Caco-2 (cell line): ENCODE measurements at regions of chr2 and their contacts with region 1.

Region 1: GRCh38 chr2:36450466-36451196 is 95.1 kb downstream of the CRIM1 start:
- DNase-seq: no peak
- H3K4me3 ChIP-seq: no peak overlapping the region
- H3K4me3 Mint-ChIP-seq: peak overlapping the region; percentile 3
- H3K27ac Mint-ChIP-seq: no peak overlapping the region
- H3K4me1 ChIP-seq: peaks cover 92% of the 10 kb centered on the region
- H3K4me1 Mint-ChIP-seq: peaks cover 43% of the 10 kb centered on the region
- H3K27me3 ChIP-seq: no peaks in the 10 kb centered on the region
- H3K27me3 Mint-ChIP-seq: no peaks in the 10 kb centered on the region
- CTCF ChIP-seq: no peak

Region 2: DNA sequence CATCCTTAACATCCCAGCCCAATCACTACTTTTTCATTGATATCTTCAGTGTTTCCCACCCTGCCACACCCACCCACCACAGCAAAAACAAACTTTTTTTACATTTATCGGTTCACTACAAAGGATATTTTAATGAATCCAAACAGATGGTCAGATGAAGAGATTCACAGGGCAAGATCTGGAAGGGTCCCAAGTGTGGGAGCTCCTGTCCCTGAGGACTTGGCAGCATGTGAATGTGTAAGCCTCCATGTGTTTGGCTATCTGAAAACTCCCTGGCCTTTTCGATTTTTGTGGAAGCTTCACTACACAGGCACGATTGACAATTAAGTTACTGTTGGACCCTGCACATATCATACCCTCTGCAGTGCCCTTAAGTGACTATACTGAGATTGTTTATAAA is 143.2 kb before region 1 on chr2:
- CTCF ChIA-PET with region 1: no interaction called
- POLR2A ChIA-PET with region 1: no interaction called
- intact Hi-C with region 1: no loop called
- DNase-seq: no peak
- H3K4me3 ChIP-seq: no peak overlapping the region
- H3K4me3 Mint-ChIP-seq: no peak overlapping the region
- H3K27ac Mint-ChIP-seq: no peak overlapping the region
- H3K4me1 ChIP-seq: no peaks in the 10 kb centered on the region
- H3K4me1 Mint-ChIP-seq: no peaks in the 10 kb centered on the region
- H3K27me3 ChIP-seq: no peaks in the 10 kb centered on the region
- H3K27me3 Mint-ChIP-seq: peaks cover 13% of the 10 kb centered on the region
- CTCF ChIP-seq: no peak

Region 3: GRCh38 chr2:36373149-36373926 is 77.3 kb before region 1 on chr2:
- CTCF ChIA-PET with region 1: no interaction called
- POLR2A ChIA-PET with region 1: no interaction called
- intact Hi-C with region 1: loop called (anchors 5 kb)
- DNase-seq: no peak
- H3K4me3 ChIP-seq: no peak overlapping the region
- H3K4me3 Mint-ChIP-seq: peak overlapping the region; percentile 40
- H3K27ac Mint-ChIP-seq: peak overlapping the region; percentile 65
- H3K4me1 ChIP-seq: peaks cover 92% of the 10 kb centered on the region
- H3K4me1 Mint-ChIP-seq: peaks cover 78% of the 10 kb centered on the region
- H3K27me3 ChIP-seq: no peaks in the 10 kb centered on the region
- H3K27me3 Mint-ChIP-seq: no peaks in the 10 kb centered on the region
- CTCF ChIP-seq: no peak